Common myeloid progenitor, CD34-positive (primary cell): ENCODE measurements at regions of chr5 and their contacts with region 1.

Region 1: DNA sequence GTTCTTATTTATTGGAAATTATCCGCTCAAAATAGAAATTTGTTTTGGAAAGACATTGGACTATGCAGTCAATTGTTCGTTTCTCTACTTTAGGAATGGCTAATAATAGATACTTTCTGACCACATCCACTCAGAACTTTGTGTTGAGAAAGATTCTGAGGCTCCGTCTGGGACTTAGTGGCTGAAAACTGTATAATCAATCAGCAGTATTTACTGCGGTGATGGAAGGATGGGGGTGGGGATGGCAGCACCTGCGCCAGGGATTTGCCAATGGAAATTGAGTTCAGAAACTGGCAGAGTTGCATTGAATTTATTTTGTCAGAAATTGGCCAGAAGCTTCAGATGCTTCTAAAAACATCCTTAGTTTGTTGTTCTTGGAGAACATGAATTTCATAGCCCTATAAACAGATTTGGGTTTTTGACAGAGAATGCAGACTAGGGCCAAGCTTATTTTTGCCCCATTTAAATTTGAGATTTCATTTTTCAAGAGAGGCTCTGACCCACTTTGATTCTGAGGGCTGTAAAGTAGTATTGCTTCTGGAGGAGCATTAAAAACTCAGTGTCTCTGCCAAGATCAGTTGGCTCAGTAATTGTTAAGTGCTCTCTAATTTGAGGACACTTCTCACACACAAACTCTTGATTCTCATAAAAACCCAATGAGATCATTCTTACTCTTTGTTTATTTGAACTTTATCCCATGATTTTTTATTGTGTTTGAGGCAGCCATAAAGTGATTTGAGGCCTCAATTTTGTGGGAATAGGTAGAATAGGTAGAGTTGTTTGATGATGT is 215.1 kb downstream of the CD180 start:
- DNase-seq: no peak
- H3K4me3 ChIP-seq: no peak overlapping the region
- H3K27ac ChIP-seq: no peak overlapping the region
- H3K4me1 ChIP-seq: no peaks in the 10 kb centered on the region
- H3K27me3 ChIP-seq: no peaks in the 10 kb centered on the region

Region 2: DNA sequence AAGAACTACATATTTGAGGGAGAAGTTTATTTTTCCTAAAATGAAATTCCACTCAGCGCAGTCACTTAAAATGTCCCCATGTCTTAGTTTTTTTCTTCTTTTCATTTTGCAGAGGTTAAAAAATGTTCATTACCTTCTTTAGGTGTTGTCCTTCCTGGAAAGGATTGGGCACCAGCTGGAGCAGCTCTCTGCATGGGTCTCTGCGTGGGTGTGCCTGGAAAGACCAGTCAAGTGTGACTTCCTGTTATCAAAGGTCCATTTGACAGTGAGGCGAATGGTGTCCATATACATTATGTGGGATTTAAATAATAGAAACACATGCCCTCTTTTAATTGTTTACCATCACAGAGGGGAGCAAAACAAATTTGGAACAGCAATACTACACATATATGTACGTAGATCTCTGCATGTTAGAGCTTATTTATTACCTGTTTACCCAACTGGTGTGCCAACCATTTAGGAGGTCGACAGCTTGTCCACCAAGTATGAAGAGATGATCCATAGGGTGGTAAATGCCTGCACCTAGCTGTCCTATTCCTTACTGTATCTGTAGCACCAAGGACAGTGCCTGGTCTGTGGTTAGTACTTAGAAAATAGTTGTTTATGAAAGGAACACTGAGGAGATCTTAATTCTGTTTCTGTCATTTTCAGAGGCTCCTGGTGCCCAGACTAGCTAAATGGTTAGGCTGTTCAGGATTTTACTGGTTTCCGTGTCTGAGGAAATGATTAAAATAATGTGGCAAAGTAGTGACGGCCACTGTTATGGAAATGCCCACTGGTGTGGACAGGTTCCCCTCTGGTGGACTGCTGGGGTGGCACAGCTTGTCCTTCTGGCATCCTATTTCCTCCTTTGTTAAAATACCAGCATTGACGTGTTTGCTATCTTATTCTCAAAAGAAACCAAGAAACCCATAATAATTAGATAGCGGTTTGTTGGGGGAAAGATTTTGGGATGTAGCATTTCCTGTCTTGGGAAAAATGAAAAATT is 184.9 kb before region 1 on chr5:
- CTCF ChIA-PET with region 1: no interaction called
- POLR2A ChIA-PET with region 1: no interaction called
- DNase-seq: no peak
- H3K4me3 ChIP-seq: no peak overlapping the region
- H3K27ac ChIP-seq: no peak overlapping the region
- H3K4me1 ChIP-seq: no peaks in the 10 kb centered on the region
- H3K27me3 ChIP-seq: no peaks in the 10 kb centered on the region

Region 3: GRCh38 chr5:66881480-66882156 is 99.8 kb before region 1 on chr5:
- CTCF ChIA-PET with region 1: no interaction called
- POLR2A ChIA-PET with region 1: no interaction called
- DNase-seq: no peak
- H3K4me3 ChIP-seq: no peak overlapping the region
- H3K27ac ChIP-seq: no peak overlapping the region
- H3K4me1 ChIP-seq: no peaks in the 10 kb centered on the region
- H3K27me3 ChIP-seq: no peaks in the 10 kb centered on the region

Region 4: GRCh38 chr5:66969961-66970360 is 11.5 kb before region 1 on chr5:
- CTCF ChIA-PET with region 1: interaction called, 12 read pairs
- POLR2A ChIA-PET with region 1: no interaction called
- DNase-seq: peak in 2 of 3 donors; percentile 18 to 19
- H3K4me3 ChIP-seq: no peak overlapping the region
- H3K27ac ChIP-seq: no peak overlapping the region
- H3K4me1 ChIP-seq: no peaks in the 10 kb centered on the region
- H3K27me3 ChIP-seq: no peaks in the 10 kb centered on the region